Panc1 (cell line): ENCODE measurements at regions of chr1 and their contacts with region 1.

Region 1: GRCh38 chr1:54996359-54996868 is 2.3 kb upstream of the BSND start:
- DNase-seq: no peak
- ATAC-seq: peak; percentile 88
- H3K4me3 ChIP-seq: no peak overlapping the region
- H3K27ac ChIP-seq: no peak overlapping the region
- H3K4me1 ChIP-seq: no peaks in the 10 kb centered on the region
- H3K27me3 ChIP-seq: no peaks in the 10 kb centered on the region
- CTCF ChIP-seq: peak; percentile 92

Region 2: GRCh38 chr1:54944610-54945544 is 51.5 kb before region 1 on chr1:
- CTCF ChIA-PET with region 1: interaction called, 19 read pairs
- POLR2A ChIA-PET with region 1: no interaction called
- in situ Hi-C with region 1: no loop called
- intact Hi-C with region 1: loop called (anchors 1 kb)
- DNase-seq: peak; percentile 47
- ATAC-seq: peak; percentile 85
- H3K4me3 ChIP-seq: no peak overlapping the region
- H3K27ac ChIP-seq: no peak overlapping the region
- H3K4me1 ChIP-seq: no peaks in the 10 kb centered on the region
- H3K27me3 ChIP-seq: no peaks in the 10 kb centered on the region
- CTCF ChIP-seq: peak; percentile 89

Region 3: DNA sequence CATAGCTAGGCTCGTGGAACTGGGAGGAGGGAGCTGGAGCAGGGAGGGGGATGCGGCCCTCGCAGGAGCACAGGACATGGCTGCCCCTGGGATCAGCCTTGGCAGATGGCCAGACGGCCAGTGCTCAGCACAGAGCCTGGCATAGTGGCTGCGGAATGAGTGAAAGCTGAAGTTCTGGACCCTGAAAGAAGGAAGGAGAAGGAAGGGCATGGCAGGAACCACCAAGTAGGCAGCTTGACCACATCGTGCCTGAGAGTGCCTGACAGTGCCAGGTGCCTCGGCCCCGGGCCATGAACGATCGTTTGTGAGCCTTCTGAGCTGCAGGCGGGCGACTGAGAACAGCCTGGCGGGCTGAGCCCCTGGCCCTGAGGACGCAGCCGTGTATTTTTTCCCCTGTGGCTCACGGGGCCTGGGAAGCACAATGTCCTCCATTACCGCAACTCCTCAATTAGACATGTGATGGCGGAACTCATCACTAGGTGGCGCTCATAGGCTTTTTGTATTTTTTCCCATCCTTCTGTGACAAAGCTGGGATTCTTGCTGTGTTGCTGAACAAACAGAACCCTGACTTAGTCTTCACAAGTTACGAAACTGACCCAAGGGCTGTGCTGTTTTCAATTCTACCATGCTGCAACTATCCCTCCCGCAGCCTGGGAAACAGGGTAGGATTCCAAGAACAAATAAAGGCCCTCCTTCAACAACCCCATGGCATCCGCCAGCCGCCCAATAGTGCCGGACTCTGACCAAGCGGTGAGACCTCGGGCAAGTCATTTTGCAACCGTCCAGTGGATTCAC is 45.8 kb before region 1 on chr1:
- CTCF ChIA-PET with region 1: interaction called, 19 read pairs
- POLR2A ChIA-PET with region 1: no interaction called
- in situ Hi-C with region 1: no loop called
- intact Hi-C with region 1: loop called (anchors 1 kb)
- DNase-seq: peak; percentile 85
- ATAC-seq: peak; percentile 90
- H3K4me3 ChIP-seq: peak overlapping the region; percentile 8 to 47
- H3K27ac ChIP-seq: peak overlapping the region; percentile 23; the same call in 1 of the 2 replicates
- H3K4me1 ChIP-seq: peaks cover 5% of the 10 kb centered on the region; the same call in 1 of the 2 replicates
- H3K27me3 ChIP-seq: no peaks in the 10 kb centered on the region
- CTCF ChIP-seq: peak; percentile 86